ENCODE measurements at regions of chr16 and their contacts with region 1.

Region 1: GRCh38 chr16:4339909-4340308 is 11.2 kb downstream of the PAM16 start:
- DNase-seq: no peak
- H3K4me3 ChIP-seq: no peak overlapping the region
- H3K27ac ChIP-seq: no peak overlapping the region
- H3K4me1 ChIP-seq: peaks cover 0 to 5% (median 0%) of the 10 kb centered on the region in 4 donors
- H3K27me3 ChIP-seq: no peaks in the 10 kb centered on the region
- CTCF ChIP-seq: no peak
- EP300 ChIP-seq: no peak
- POLR2A ChIP-seq: no peak

Region 2: GRCh38 chr16:2821487-2822157 is 1518.3 kb before region 1 on chr16:
- in situ Hi-C with region 1: no loop called
- intact Hi-C with region 1: loop called (anchors 5 kb)
- DNase-seq: peak; percentile 3
- H3K4me3 ChIP-seq: no peak overlapping the region
- H3K27ac ChIP-seq: no peak overlapping the region
- H3K4me1 ChIP-seq: no peaks in the 10 kb centered on the region
- H3K27me3 ChIP-seq: no peaks in the 10 kb centered on the region
- CTCF ChIP-seq: no peak
- EP300 ChIP-seq: no peak
- POLR2A ChIP-seq: no peak

Region 3: GRCh38 chr16:4271176-4272066 is 68.5 kb before region 1 on chr16:
- in situ Hi-C with region 1: no loop called
- intact Hi-C with region 1: no loop called
- DNase-seq: peak; percentile 93
- H3K4me3 ChIP-seq: peak overlapping the region; percentile 79 to 95 (median 88)
- H3K27ac ChIP-seq: peak overlapping the region; percentile 84 to 97 (median 94)
- H3K4me1 ChIP-seq: peaks cover 5 to 16% (median 7%) of the 10 kb centered on the region in 4 donors
- H3K27me3 ChIP-seq: no peaks in the 10 kb centered on the region
- CTCF ChIP-seq: peak in 1 of 5 experiments; percentile 14
- EP300 ChIP-seq: no peak
- POLR2A ChIP-seq: no peak

Region 4: DNA sequence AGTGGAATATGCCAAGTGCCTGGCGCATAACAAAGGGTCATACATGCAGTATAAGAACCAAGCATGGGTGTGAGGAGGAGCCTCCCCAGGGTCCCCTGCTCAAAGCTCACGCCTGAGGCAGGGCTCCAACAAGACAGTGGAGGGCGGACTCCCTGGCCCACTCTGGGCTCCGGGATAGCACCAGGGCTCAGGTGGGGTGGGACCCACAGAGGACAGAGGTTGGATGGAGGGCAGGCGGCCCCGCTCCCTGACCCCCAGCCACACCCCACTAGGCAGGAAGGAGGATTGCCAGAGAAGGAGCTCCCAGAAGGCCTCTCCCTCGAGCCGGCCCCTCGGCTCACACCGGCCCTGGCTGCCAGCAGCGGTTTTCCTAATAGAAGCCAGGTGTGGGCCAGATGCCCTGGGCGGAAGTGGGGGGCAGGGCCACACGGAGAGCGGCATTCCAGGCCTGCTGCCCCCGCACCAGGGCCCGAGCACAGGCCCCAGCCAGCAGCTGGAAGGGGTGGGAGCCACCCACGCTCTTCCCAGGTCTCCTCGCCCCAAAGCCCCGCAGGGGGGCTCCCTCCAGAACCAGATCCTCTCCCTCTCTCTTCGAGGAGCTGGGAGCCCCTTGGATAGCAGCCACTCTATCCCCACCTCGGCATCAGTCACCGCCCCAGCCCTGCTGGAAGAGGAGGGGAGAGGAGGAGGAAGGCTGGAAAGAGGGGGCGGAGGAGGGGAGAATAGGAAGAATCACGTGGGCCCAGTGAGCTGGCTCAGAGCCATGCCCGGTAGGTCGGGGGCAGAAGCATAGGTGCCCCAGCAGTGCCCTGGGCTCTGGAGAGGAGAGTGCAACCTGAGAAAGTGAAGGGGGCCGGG is 52.7 kb after region 1 on chr16:
- in situ Hi-C with region 1: no loop called
- intact Hi-C with region 1: no loop called
- DNase-seq: no peak
- H3K4me3 ChIP-seq: no peak overlapping the region
- H3K27ac ChIP-seq: peak overlapping the region; percentile 30 to 67 (median 38)
- H3K4me1 ChIP-seq: peaks cover 3 to 14% (median 7%) of the 10 kb centered on the region in 4 donors
- H3K27me3 ChIP-seq: no peaks in the 10 kb centered on the region
- CTCF ChIP-seq: no peak
- EP300 ChIP-seq: no peak
- POLR2A ChIP-seq: no peak

Measured in transverse colon (tissue), 4 donors.